Natural killer cell (primary cell): ENCODE measurements at regions of chr15 and their contacts with region 1.

Region 1: GRCh38 chr15:41660235-41661077 is at the start of gene MGA:
- DNase-seq: peak; percentile 87 to 95
- ATAC-seq: peak; percentile 74 to 88 (median 74)
- H3K4me3 ChIP-seq: peak within 1 kb of the TSS; percentile 44
- H3K4me3 Mint-ChIP-seq: peak within 1 kb of the TSS; percentile 95
- H3K27ac ChIP-seq: peak within 1 kb of the TSS; percentile 95
- H3K27ac Mint-ChIP-seq: peak within 1 kb of the TSS; percentile 96 to 97
- H3K4me1 ChIP-seq: peaks cover 27% of the 10 kb centered on the region
- H3K4me1 Mint-ChIP-seq: peaks cover 24 to 32% of the 10 kb centered on the region in 2 donors
- H3K27me3 ChIP-seq: no peaks in the 10 kb centered on the region
- H3K27me3 Mint-ChIP-seq: peaks cover 0 to 6% of the 10 kb centered on the region in 2 donors
- CTCF ChIP-seq: no peak
- total RNA-seq, gene MGA: 54.9 to 75.0 (median 71.3) TPM

Region 2: GRCh38 chr15:41544650-41545015 is 115.8 kb before region 1 on chr15:
- intact Hi-C with region 1: loop called (anchors 1 kb)
- DNase-seq: peak in 1 of 2 donors; percentile 45
- ATAC-seq: no peak
- H3K4me3 ChIP-seq: peak overlapping the region; percentile 80
- H3K4me3 Mint-ChIP-seq: peak overlapping the region; percentile 91
- H3K27ac ChIP-seq: peak overlapping the region; percentile 45
- H3K27ac Mint-ChIP-seq: peak overlapping the region; percentile 82 to 89
- H3K4me1 ChIP-seq: peaks cover 15% of the 10 kb centered on the region
- H3K4me1 Mint-ChIP-seq: peaks cover 16 to 18% of the 10 kb centered on the region in 2 donors
- H3K27me3 ChIP-seq: no peaks in the 10 kb centered on the region
- H3K27me3 Mint-ChIP-seq: no peaks in the 10 kb centered on the region
- CTCF ChIP-seq: no peak

Region 3: DNA sequence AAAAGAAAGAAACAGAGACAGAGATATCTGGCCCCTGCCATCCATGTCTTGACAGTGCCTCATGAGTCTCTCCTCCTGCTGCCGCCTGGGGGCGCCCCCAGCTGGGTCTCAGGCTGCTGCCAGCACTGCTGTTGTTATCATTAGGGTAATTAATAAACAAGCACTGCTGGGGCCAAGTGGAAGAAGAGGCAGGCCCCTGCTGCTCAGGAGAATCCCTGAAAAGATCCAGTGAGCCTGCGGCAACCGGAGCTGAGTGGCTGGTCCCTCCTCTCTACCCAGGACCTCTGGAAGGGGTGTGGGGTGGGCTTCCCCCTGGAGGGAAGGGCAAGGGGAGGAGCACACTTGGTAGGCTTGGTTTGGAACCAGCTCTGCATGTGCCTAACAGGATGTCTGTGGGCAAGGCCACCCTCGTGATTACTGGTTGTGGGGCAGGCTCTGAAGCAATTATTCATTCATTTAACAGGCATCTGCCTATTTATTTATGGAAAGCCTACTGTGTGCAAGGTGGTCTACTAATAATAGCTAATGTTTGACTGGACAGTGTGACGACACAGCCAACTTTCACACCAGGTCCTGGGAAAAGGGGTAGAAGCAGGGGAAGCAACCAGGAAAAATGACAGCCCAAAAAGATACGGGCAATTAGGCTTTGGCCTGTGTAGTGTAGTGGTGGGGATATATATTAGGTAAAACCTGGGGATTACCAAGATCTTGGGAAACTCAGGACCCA is 102.6 kb before region 1 on chr15:
- intact Hi-C with region 1: loop called (anchors 1 kb)
- DNase-seq: peak; percentile 76 to 87
- ATAC-seq: peak; percentile 84 to 92 (median 90)
- H3K4me3 ChIP-seq: no peak overlapping the region
- H3K4me3 Mint-ChIP-seq: peak overlapping the region; percentile 94
- H3K27ac ChIP-seq: peak overlapping the region; percentile 10
- H3K27ac Mint-ChIP-seq: peak overlapping the region; percentile 90 to 95
- H3K4me1 ChIP-seq: peaks cover 21% of the 10 kb centered on the region
- H3K4me1 Mint-ChIP-seq: peaks cover 11 to 26% of the 10 kb centered on the region in 2 donors
- H3K27me3 ChIP-seq: peaks cover 23% of the 10 kb centered on the region
- H3K27me3 Mint-ChIP-seq: peaks cover 0 to 26% of the 10 kb centered on the region in 2 donors
- CTCF ChIP-seq: peak; percentile 97

Region 4: GRCh38 chr15:41621200-41622193 is 39.0 kb before region 1 on chr15:
- intact Hi-C with region 1: loop called (anchors 5 kb)
- DNase-seq: peak; percentile 65 to 86
- ATAC-seq: peak; percentile 80 to 84 (median 82)
- H3K4me3 ChIP-seq: peak overlapping the region; percentile 41
- H3K4me3 Mint-ChIP-seq: peak overlapping the region; percentile 78
- H3K27ac ChIP-seq: peak overlapping the region; percentile 27
- H3K27ac Mint-ChIP-seq: peak overlapping the region; percentile 68 to 84
- H3K4me1 ChIP-seq: peaks cover 16% of the 10 kb centered on the region
- H3K4me1 Mint-ChIP-seq: peaks cover 10 to 16% of the 10 kb centered on the region in 2 donors
- H3K27me3 ChIP-seq: no peaks in the 10 kb centered on the region
- H3K27me3 Mint-ChIP-seq: no peaks in the 10 kb centered on the region
- CTCF ChIP-seq: no peak

Region 5: DNA sequence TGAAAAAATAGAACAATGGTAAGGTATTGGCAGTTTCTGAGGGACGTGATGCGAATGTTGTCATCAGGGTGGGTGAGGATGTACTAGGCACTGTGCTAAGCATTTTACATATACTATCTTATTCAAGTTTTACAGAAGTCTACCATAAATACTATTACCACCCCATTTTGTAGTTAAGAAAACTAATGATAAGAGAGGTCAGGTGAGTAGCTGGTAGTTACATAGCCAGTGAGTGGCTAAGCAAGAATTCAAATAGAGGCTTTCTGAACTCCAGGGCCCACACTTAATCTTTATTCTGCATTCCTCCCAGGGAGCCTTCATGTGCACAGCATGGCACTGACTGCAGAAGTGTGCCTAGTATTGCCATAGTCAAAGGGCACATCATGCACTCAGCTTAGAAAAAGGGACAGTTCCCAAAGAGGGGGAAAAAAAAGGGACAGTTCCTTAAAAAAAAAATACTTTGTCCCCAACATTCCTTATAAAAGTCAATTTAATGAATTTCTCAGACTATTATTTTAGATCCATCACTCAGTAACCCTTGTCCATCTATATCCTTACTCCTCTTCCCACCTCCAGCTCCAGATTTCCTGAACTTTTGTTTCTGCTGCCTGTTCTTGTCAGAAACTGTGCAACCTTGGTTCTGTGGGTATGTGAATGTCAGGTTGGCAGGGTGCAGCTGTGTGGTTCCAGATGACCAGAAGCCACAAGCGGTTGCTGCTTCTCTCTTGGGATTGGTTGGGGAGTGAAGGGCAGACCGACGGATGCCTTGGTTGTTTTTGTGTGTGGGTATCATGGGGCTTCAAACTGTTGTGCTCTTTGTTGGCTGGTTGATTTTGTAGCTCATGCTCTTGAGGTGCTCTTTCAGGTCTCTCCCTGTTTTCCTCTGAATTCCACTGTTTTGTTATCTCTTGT is 122.2 kb after region 1 on chr15:
- intact Hi-C with region 1: no loop called
- DNase-seq: no peak
- ATAC-seq: peak in 1 of 3 donors; percentile 48
- H3K4me3 ChIP-seq: no peak overlapping the region
- H3K4me3 Mint-ChIP-seq: no peak overlapping the region
- H3K27ac ChIP-seq: no peak overlapping the region
- H3K27ac Mint-ChIP-seq: no peak overlapping the region
- H3K4me1 ChIP-seq: peaks cover 16% of the 10 kb centered on the region
- H3K4me1 Mint-ChIP-seq: peaks cover 46 to 48% of the 10 kb centered on the region in 2 donors
- H3K27me3 ChIP-seq: no peaks in the 10 kb centered on the region
- H3K27me3 Mint-ChIP-seq: no peaks in the 10 kb centered on the region
- CTCF ChIP-seq: no peak